Mammary epithelial cell (primary cell): ENCODE measurements at regions of chr11 and their contacts with region 1.

Region 1: DNA sequence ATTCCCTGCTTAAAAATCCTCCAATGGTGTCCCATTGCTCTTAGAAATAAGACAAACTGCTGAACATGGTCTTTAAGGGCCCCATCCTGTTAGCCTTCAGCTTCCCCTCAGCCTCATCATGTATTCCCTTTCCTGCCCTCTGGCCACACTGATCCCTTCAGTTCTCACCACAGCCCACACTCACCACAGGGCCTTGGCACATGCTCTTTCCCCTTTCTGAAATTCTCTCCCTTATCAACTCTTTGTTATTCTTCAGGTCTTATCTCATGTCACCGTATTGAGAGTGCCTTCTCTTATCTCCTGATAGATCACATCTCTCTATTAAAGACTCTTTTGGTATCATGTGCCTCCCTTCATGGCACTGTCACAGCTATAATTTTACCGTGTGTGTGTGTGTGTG is 167.8 kb upstream of the MPPED2 start:
- DNase-seq: no peak
- H3K4me3 ChIP-seq: no peak overlapping the region
- H3K27ac ChIP-seq: no peak overlapping the region
- H3K4me1 ChIP-seq: no peaks in the 10 kb centered on the region
- H3K27me3 ChIP-seq: no peaks in the 10 kb centered on the region
- CTCF ChIP-seq: no peak

Region 2: GRCh38 chr11:30573951-30574350 is 180.0 kb before region 1 on chr11:
- CTCF ChIA-PET with region 1: no interaction called
- dilution Hi-C with region 1: no loop called
- in situ Hi-C with region 1: no loop called
- intact Hi-C with region 1: no loop called
- DNase-seq: no peak
- H3K4me3 ChIP-seq: no peak overlapping the region
- H3K27ac ChIP-seq: no peak overlapping the region
- H3K4me1 ChIP-seq: no peaks in the 10 kb centered on the region
- H3K27me3 ChIP-seq: no peaks in the 10 kb centered on the region
- CTCF ChIP-seq: no peak

Region 3: DNA sequence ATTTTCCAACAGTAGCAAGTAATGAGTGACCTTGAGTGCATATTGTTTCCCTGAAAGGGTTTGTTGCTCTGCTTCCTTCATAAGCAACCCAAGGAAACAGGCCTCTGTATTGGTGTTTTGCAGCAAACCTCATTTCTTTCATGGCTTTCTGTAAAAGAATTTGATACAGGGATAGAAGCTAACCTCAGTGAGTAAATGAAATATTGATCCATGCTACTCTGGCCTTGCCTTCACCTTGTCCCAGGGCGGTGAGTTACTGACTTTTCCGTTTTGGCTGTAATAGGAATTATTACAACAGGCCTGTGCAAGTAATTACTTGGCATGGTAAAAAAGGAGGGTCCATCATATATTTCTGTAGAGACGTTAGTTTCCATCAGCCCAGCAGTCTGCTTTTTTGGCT is 37.0 kb before region 1 on chr11:
- CTCF ChIA-PET with region 1: no interaction called
- dilution Hi-C with region 1: no loop called
- in situ Hi-C with region 1: no loop called
- intact Hi-C with region 1: no loop called
- DNase-seq: no peak
- H3K4me3 ChIP-seq: no peak overlapping the region
- H3K27ac ChIP-seq: no peak overlapping the region
- H3K4me1 ChIP-seq: no peaks in the 10 kb centered on the region
- H3K27me3 ChIP-seq: no peaks in the 10 kb centered on the region
- CTCF ChIP-seq: no peak

Region 4: GRCh38 chr11:30786256-30787110 is 32.5 kb after region 1 on chr11:
- CTCF ChIA-PET with region 1: no interaction called
- dilution Hi-C with region 1: loop called (anchors 5 kb)
- in situ Hi-C with region 1: no loop called
- intact Hi-C with region 1: no loop called
- DNase-seq: no peak
- H3K4me3 ChIP-seq: no peak overlapping the region
- H3K27ac ChIP-seq: no peak overlapping the region
- H3K4me1 ChIP-seq: no peaks in the 10 kb centered on the region
- H3K27me3 ChIP-seq: no peaks in the 10 kb centered on the region
- CTCF ChIP-seq: no peak

Region 5: GRCh38 chr11:30876663-30877396 is 122.8 kb after region 1 on chr11:
- CTCF ChIA-PET with region 1: no interaction called
- dilution Hi-C with region 1: no loop called
- in situ Hi-C with region 1: no loop called
- intact Hi-C with region 1: no loop called
- DNase-seq: no peak
- H3K4me3 ChIP-seq: no peak overlapping the region
- H3K27ac ChIP-seq: no peak overlapping the region
- H3K4me1 ChIP-seq: no peaks in the 10 kb centered on the region
- H3K27me3 ChIP-seq: no peaks in the 10 kb centered on the region
- CTCF ChIP-seq: no peak